Activated CD4-positive, alpha-beta T cell treated with anti-CD3 and anti-CD28 coated beads, Interleukin-2, amount 10 ng/mL, durations not matched to agents 24 days and 14 days (primary cell): ENCODE measurements at regions of chr6 and their contacts with region 1.

Region 1: GRCh38 chr6:90216072-90216977 is 80.3 kb downstream of the BACH2 start:
- DNase-seq: peak; percentile 79
- H3K4me3 Mint-ChIP-seq: peak overlapping the region; percentile 48
- H3K27ac Mint-ChIP-seq: no peak overlapping the region
- H3K4me1 Mint-ChIP-seq: peaks cover 40% of the 10 kb centered on the region
- H3K27me3 Mint-ChIP-seq: no peaks in the 10 kb centered on the region

Region 2: DNA sequence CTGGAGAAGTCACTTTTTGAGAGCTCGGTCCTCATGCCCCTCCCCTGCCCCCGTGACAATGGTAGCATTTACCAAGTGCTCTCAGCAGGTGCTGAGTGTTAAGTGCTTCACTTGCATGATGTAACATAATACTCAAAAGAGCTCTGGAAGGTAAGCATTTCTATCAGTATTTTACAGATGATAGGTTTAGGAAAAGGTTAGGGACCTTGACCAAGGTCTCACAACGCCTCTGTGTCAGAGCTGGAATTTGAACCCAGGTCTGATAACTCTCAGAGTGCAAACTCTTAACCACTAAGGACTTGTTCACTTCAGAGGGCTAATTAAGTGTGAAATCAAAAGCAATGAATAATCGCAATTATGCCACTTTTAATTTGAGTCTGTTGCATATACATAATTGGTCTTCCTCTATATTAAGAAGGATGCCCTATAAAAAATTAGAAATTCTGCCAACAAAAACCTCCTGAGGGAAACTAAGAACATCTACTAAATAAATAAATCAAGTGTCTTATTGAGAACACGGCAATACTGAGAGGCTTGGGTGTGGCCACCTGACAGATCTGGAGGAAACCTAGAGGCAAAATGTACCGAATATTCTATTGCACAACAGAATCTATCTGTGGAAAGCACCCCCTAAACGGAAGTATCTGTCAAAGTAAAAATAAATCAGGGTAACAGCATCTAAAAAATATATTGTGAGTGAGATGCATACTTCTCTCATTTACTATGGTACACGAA is 29.5 kb before region 1 on chr6:
- intact Hi-C with region 1: loop called (anchors 2 kb)
- DNase-seq: peak; percentile 75
- H3K4me3 Mint-ChIP-seq: peak overlapping the region; percentile 86
- H3K27ac Mint-ChIP-seq: peak overlapping the region; percentile 89
- H3K4me1 Mint-ChIP-seq: peaks cover 71% of the 10 kb centered on the region
- H3K27me3 Mint-ChIP-seq: no peaks in the 10 kb centered on the region

Region 3: GRCh38 chr6:90197854-90198496 is 18.4 kb before region 1 on chr6:
- intact Hi-C with region 1: loop called (anchors 1 kb)
- DNase-seq: peak; percentile 58
- H3K4me3 Mint-ChIP-seq: no peak overlapping the region
- H3K27ac Mint-ChIP-seq: no peak overlapping the region
- H3K4me1 Mint-ChIP-seq: peaks cover 47% of the 10 kb centered on the region
- H3K27me3 Mint-ChIP-seq: no peaks in the 10 kb centered on the region

Region 4: GRCh38 chr6:90230548-90231215 is 14.4 kb after region 1 on chr6:
- intact Hi-C with region 1: loop called (anchors 1 kb)
- DNase-seq: no peak
- H3K4me3 Mint-ChIP-seq: peak overlapping the region; percentile 56
- H3K27ac Mint-ChIP-seq: peak overlapping the region; percentile 30
- H3K4me1 Mint-ChIP-seq: peaks cover 78% of the 10 kb centered on the region
- H3K27me3 Mint-ChIP-seq: no peaks in the 10 kb centered on the region

Region 5: GRCh38 chr6:90446164-90446563 is 229.8 kb after region 1 on chr6:
- intact Hi-C with region 1: no loop called
- DNase-seq: no peak
- H3K4me3 Mint-ChIP-seq: no peak overlapping the region
- H3K27ac Mint-ChIP-seq: peak overlapping the region; percentile 86
- H3K4me1 Mint-ChIP-seq: peaks cover 38% of the 10 kb centered on the region
- H3K27me3 Mint-ChIP-seq: no peaks in the 10 kb centered on the region

Region 6: GRCh38 chr6:91497770-91498169 is 1281.4 kb after region 1 on chr6:
- intact Hi-C with region 1: no loop called
- DNase-seq: no peak
- H3K4me3 Mint-ChIP-seq: no peak overlapping the region
- H3K27ac Mint-ChIP-seq: no peak overlapping the region
- H3K4me1 Mint-ChIP-seq: no peaks in the 10 kb centered on the region
- H3K27me3 Mint-ChIP-seq: no peaks in the 10 kb centered on the region